ENCODE measurements at regions of chr3 and their contacts with region 1.

Region 1: DNA sequence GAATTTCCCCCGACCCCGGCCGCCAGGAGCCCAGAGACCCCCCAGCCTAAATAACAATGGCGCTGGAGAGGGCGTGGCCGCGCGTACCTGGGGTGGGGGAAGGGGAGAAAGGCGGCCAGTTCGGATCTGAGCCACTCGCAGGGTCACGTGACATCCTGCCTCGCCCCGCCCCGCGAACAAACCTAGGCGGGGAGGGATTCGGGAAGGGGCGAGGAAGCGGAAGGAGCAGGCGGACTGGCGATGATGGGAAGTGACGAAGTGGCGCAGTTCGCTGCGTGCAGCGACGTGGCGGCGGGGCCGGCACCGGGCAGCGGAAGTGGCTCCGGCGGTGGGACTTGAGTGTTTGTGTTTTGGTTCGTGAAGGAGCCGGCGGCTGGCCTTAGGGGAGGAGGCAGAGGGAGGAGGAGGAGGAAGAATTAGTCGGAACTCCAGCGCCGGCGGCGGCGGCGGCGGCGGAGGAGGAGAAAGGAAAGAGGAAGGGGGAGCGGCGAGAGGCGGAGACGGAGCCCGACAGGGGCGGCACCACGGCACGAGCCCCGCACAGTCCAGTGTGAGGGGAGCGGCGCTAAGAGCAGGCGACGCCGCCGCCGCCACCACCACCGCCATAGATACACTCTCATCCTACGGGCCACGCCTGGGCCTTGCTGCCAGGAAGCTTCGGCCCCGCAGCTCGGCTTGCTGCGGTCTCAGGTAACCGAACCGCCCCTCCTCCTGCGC is at the start of gene RAB5A:
- DNase-seq: peak; percentile 92 to 98 (median 97)

Region 2: DNA sequence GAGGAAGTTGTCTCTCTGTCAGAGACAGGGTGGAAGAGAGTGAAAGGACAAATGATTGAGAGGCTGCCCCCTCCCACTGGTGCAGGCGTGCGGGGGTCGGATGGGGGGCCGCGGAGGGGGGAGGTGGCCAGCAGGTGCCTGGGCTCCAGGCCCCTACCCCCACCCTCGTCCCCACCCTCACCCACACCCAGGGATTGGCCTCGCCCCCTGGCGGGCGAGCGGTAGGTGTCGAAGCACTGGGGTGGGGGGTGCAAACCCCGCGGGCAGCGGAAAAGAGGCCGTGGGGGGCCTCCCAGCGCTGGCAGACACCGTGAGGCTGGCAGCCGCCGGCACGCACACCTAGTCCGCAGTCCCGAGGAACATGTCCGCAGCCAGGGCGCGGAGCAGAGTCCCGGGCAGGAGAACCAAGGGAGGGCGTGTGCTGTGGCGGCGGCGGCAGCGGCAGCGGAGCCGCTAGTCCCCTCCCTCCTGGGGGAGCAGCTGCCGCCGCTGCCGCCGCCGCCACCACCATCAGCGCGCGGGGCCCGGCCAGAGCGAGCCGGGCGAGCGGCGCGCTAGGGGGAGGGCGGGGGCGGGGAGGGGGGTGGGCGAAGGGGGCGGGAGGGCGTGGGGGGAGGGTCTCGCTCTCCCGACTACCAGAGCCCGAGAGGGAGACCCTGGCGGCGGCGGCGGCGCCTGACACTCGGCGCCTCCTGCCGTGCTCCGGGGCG is 92.9 kb after region 1 on chr3 and contains the start of gene KAT2B:
- intact Hi-C with region 1: loop called (anchors 5 kb)
- DNase-seq: peak; percentile 68 to 94 (median 86)